Psoas muscle (tissue), 8 donors: ENCODE measurements at regions of chr7 and their contacts with region 1.

Region 1: GRCh38 chr7:124630395-124630794 is 135.2 kb downstream of the GPR37 start:
- DNase-seq: no peak
- ATAC-seq: no peak
- H3K4me3 ChIP-seq: no peak overlapping the region
- H3K27ac ChIP-seq: no peak overlapping the region
- H3K4me1 ChIP-seq: no peaks in the 10 kb centered on the region
- H3K27me3 ChIP-seq: no peaks in the 10 kb centered on the region
- CTCF ChIP-seq: no peak

Region 2: GRCh38 chr7:124577256-124577655 is 53.1 kb before region 1 on chr7:
- intact Hi-C with region 1: loop called in 1 of 2 experiments (anchors 2 kb)
- DNase-seq: no peak
- ATAC-seq: no peak
- H3K4me3 ChIP-seq: no peak overlapping the region
- H3K27ac ChIP-seq: no peak overlapping the region
- H3K4me1 ChIP-seq: no peaks in the 10 kb centered on the region
- H3K27me3 ChIP-seq: no peaks in the 10 kb centered on the region
- CTCF ChIP-seq: no peak

Region 3: GRCh38 chr7:124649397-124650029 is 19.1 kb after region 1 on chr7:
- intact Hi-C with region 1: no loop called
- DNase-seq: no peak
- ATAC-seq: no peak
- H3K4me3 ChIP-seq: no peak overlapping the region
- H3K27ac ChIP-seq: no peak overlapping the region
- H3K4me1 ChIP-seq: no peaks in the 10 kb centered on the region
- H3K27me3 ChIP-seq: no peaks in the 10 kb centered on the region
- CTCF ChIP-seq: no peak